ENCODE measurements at regions of chr3 and their contacts with region 1.

Region 1: DNA sequence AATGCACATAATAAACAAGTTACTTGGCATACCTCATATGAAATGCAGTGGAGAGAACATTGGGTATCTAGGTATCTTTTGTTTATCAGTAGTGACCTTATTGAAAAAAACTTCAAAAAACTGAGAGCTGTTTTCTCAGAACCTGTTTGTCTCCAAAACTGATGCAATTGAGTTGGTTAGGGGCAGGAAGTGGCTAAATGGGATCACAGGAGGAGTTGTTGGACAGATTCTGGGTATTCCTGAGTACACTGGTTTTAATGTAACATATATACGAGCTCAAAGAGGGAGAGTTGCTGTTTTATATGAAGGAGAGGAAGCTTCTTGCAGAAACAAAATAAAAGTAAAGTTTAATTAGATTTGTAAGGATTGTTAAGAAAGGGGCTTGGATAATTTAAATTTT is 159.5 kb downstream of the C3orf70 start:
- DNase-seq: no peak
- H3K4me3 ChIP-seq: no peak overlapping the region
- CTCF ChIP-seq: no peak

Region 2: GRCh38 chr3:184952671-184953070 is 40.7 kb before region 1 on chr3:
- in situ Hi-C with region 1: loop called (anchors 5 kb)
- DNase-seq: no peak
- H3K4me3 ChIP-seq: no peak overlapping the region
- CTCF ChIP-seq: no peak